Cardiac septum (tissue), 1 donor: ENCODE measurements at regions of chr10 and their contacts with region 1.

Region 1: GRCh38 chr10:104254493-104255310 is at the start of gene GSTO1:
- DNase-seq: peak; percentile 95
- total RNA-seq, gene GSTO1: 209 TPM

Region 2: DNA sequence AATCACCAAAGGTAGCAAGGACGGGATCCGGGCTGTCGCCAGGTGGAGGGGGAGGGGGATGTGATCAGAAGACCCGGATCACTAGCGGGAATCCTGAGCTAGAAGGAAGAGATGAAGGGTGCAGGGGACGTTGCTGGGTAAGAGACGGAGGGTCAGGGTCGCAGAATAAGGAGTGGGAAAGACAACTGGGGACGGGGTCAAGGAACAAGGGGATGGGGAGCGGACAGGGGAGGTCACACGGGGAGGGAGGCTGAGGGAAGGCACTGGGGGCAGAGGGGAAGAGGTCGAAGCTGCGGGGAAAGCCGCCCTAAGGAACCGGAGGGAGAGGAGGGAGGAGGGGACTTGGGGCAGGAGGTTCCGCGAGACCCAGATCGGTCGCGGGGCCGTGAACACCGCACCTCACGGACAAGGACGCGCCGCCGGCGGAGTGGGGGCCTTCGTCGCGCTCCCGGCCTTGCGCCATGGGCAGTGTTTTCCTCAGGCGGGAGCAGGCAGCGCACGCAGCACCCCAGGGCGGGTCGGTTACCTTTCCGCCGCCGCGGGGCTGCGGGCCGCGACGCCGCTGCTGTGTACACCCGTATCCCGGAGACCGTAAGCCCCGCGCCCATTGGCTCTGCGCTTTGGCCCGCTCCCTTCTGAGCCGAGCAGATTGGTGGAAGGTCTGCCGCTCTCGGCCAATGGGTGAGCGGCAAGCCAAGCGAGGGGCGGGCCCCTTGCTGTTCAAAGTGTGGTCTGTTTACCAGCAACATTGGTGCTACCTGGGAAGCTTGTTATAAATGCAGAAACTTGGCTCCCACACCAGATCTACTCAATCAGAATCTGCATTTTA is 22.7 kb before region 1 on chr10 and contains the start of gene CFAP43:
- intact Hi-C with region 1: loop called (anchors 2 kb)
- DNase-seq: peak; percentile 99
- total RNA-seq, gene CFAP43: 0.08 TPM